ENCODE measurements at regions of chr2 and their contacts with region 1.

Region 1: DNA sequence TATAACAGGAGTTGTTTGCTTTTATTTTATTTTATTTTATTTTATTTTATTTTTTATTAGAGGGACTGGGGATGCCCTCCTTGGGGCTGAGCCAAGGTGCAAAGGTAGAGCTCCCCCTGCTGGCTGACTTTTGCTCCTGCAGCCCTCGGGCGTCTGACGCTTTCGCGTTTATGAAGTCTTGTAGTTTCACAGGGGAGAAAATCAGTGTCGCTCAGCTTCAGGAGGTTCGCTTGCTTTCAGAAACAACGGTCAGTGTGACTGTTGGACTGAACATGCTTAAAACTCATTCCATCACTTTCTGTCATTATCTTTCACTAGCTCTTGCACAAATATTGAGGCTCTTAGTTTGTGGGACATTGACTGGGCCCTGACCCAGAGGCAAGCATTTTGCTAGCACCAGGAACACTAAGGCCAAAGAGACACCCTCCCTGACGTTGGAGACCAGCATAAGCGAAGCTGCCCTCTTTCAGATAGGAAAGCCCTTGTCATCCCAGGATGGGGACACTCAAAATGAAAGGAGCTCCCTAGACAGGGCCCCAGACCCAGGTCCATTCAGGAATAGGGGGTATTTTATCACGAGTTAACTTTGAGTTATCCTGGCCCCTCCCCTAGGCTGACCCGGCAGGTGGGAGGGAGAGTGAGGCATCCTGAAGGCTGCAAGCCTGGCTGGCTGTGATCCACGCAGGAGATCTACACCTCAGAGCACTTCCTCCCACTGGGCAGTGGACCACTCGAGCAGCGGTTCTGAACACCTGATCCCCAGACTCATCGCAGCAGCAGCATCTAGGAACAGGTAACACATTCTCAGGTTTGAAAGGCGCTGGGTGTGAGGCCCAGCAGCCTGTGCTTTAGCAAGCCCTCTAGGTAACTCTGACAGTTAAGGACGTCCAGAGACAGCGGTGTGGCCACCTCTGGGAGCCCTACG is 34.4 kb downstream of the LGALSL start:
- DNase-seq: peak; percentile 86
- H3K4me3 Mint-ChIP-seq: no peak overlapping the region
- H3K27ac Mint-ChIP-seq: no peak overlapping the region
- H3K4me1 Mint-ChIP-seq: peaks cover 33% of the 10 kb centered on the region
- H3K27me3 Mint-ChIP-seq: peaks cover 56% of the 10 kb centered on the region

Region 2: DNA sequence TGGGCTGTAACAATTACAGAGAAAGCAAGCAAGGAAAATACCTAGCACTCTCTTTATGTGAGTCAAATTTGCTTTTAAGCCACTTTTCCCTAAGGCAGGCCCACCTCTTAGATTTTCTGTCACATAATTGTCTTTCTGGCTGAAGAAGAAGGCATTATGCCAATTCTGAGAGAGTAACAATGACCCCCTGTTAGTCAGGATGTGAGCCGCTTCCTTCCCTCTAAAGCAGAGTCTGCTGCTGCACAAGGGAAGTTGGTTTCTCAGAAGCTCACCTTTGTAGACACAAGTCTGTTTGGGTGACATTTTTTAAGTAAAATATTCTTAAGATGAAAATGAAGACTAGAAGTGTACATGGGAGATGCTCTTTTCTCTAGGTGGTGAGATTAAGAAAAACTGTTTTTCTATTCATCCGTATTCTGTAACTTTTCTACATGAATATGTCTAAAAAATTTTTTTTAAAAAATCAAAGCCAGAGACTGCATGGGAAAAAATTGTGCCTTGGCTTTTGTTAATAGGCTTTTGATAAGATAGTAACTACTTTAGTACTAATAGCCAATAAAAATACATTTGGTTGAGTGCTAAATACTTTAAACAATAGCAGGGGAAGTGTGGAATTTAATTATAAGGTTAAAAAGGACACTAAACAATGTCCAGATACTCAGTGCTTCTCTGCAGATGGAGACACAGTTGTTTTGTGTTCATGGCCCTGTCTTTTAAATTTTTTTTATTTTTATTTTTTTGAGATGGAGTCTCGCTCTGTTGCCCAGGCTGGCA is 435.7 kb before region 1 on chr2:
- CTCF ChIA-PET with region 1: interaction called, 19 read pairs
- DNase-seq: peak; percentile 41
- H3K4me3 Mint-ChIP-seq: no peak overlapping the region
- H3K27ac Mint-ChIP-seq: no peak overlapping the region
- H3K4me1 Mint-ChIP-seq: peaks cover 48% of the 10 kb centered on the region
- H3K27me3 Mint-ChIP-seq: no peaks in the 10 kb centered on the region

Region 3: DNA sequence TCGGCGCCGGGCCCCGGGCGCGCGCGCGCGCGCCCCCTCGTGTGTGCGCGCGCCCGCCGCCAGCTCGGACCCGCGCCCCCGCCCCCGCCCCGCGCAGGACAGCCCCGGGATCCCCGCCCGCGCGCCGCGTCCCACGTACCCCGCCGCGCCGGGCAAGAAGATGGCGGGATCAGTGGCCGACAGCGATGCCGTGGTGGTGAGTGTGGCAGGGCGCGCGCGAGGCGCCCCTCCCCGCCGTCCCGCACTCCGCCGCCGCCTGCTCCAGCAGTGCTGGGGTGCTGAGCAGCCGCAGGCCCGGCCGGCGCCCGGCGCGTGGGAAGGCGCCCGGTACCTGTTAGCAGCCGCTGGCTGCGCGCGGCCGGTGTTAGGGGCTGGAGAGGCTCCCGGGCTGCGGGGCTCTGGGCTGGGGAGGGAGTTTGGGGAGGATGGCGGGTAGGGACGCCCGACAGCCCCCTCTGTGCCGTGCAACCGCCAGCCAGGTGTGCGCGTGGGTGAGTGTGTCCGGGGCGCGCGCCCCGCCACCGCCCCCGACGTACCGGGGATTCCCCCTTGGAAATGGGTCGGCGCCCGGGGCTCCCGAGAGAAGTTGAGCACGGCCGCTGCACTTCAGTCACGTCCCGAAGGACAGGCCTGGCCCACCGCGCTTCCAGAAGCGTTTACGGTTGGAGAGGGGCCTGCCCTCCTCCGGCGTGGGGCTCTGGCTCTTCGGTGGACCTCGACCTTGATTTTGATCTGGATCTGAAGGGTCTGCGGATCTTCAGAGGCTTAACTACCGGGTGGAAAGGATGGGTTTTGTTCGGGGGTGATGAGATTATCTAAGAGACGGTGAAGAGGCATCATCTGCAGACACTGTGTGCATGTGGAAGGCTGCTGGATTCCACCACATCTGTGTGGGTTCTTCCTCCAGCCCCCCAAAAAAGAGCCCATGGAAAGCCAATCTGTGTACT is 33.7 kb before region 1 on chr2:
- CTCF ChIA-PET with region 1: interaction called, 28 read pairs
- DNase-seq: peak; percentile 68
- H3K4me3 Mint-ChIP-seq: peak overlapping the region; percentile 72
- H3K27ac Mint-ChIP-seq: no peak overlapping the region
- H3K4me1 Mint-ChIP-seq: peaks cover 12% of the 10 kb centered on the region
- H3K27me3 Mint-ChIP-seq: peaks cover 53% of the 10 kb centered on the region

Region 4: DNA sequence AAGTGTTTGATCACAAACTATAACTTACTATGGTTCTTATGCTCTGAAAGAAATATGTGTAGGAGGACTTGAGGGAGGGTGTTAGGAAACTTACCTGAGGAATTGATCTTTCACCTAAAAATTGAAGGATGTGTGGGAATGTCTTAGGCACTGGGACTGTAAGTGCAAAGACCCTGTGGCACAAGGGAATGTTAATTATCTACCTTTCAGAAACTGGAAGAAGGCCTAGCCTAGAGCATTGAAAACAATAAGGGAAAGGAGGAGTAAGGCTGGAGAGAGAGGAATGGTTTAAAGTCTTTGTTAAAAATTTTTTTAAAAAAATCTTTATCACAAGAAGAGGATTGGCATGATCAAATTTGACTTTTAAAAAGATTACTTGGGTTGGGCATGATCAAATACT is 43.7 kb after region 1 on chr2:
- CTCF ChIA-PET with region 1: no interaction called
- DNase-seq: no peak
- H3K4me3 Mint-ChIP-seq: no peak overlapping the region
- H3K27ac Mint-ChIP-seq: no peak overlapping the region
- H3K4me1 Mint-ChIP-seq: peaks cover 38% of the 10 kb centered on the region
- H3K27me3 Mint-ChIP-seq: no peaks in the 10 kb centered on the region

Measured in activated naive CD4-positive, alpha-beta T cell treated with anti-CD3 and anti-CD28 coated beads, Interleukin-2, amount 10 ng/mL, durations not matched to agents 7 days and 5 days (primary cell).